ENCODE measurements at regions of chr10 and their contacts with region 1.

Region 1: DNA sequence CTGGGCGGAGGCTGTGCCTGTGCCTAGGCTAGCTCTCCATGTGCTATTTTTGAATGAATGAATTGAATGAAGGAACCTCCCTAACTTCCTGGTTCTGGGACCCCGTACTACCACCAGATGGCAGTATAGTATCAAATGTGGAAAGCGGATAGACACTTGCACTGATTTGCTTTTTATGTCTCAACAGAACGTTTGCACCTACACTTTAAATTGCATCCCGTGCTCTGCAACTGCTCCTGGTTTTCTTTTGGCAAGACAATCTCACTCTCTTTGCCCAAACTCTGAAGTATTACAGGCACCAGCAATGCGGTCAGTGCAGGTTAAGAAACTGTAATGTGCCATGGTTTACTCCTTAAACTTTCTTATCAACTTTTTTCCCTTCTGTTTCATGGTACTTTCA is 6.5 kb downstream of the FZD8 start:
- DNase-seq: peak; percentile 63
- H3K4me3 ChIP-seq: no peak overlapping the region
- H3K27ac ChIP-seq: no peak overlapping the region
- H3K4me1 ChIP-seq: peaks cover 35% of the 10 kb centered on the region
- H3K27me3 ChIP-seq: no peaks in the 10 kb centered on the region
- CTCF ChIP-seq: peak; percentile 92 to 93

Region 2: DNA sequence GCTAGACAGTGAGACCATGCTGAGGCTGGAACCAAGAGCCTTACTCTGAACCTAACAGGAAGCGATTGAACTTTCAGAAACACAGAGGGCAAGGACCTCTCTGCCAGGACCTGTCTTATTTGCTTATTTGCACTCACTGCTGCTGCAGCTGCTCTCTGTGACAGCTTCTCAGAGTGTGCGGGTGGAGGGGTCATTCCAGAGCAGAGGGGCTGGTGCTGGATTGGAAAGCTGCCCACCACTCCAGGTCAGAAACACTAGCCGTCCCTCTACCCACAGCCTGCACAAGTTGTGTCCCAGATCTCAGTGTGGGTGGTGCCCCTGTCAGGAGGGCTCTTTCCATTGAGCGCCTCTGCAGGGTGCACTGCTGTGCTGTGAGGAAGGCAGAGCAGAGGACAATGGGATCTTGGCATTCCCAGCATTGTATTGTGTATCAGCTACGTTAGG is 173.1 kb before region 1 on chr10:
- CTCF ChIA-PET with region 1: no interaction called
- dilution Hi-C with region 1: no loop called
- in situ Hi-C with region 1: no loop called
- intact Hi-C with region 1: no loop called
- DNase-seq: no peak
- H3K4me3 ChIP-seq: no peak overlapping the region
- H3K27ac ChIP-seq: no peak overlapping the region
- H3K4me1 ChIP-seq: peaks cover 16% of the 10 kb centered on the region
- H3K27me3 ChIP-seq: no peaks in the 10 kb centered on the region
- CTCF ChIP-seq: no peak

Region 3: DNA sequence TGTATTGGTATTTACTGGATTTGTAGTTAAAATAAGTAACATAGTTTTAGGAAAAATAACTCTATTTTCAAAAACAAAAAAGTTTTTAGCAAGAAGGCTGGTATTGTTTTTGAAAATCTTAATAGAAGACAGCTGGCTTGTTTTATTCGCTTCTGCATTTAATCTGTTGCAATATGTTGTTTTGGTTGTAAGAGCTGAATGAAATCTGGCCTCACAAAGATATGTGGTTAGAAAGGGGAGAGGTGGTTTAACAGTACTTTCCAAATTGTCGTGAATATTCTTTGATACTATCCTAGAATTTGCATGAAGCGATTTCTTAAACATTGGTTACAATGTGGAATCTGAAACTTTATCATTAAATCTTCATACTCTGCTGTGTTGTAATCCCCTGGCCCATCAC is 362.4 kb after region 1 on chr10:
- CTCF ChIA-PET with region 1: no interaction called
- dilution Hi-C with region 1: no loop called
- in situ Hi-C with region 1: no loop called
- intact Hi-C with region 1: loop called (anchors 2 kb)
- DNase-seq: no peak
- H3K4me3 ChIP-seq: no peak overlapping the region
- H3K27ac ChIP-seq: no peak overlapping the region
- H3K4me1 ChIP-seq: no peaks in the 10 kb centered on the region
- H3K27me3 ChIP-seq: peaks cover 3% of the 10 kb centered on the region
- CTCF ChIP-seq: no peak

Region 4: GRCh38 chr10:36412942-36413341 is 777.4 kb after region 1 on chr10:
- CTCF ChIA-PET with region 1: interaction called, 29 read pairs
- dilution Hi-C with region 1: no loop called
- in situ Hi-C with region 1: no loop called
- intact Hi-C with region 1: no loop called
- DNase-seq: peak; percentile 34
- H3K4me3 ChIP-seq: no peak overlapping the region
- H3K27ac ChIP-seq: no peak overlapping the region
- H3K4me1 ChIP-seq: peaks cover 6% of the 10 kb centered on the region
- H3K27me3 ChIP-seq: no peaks in the 10 kb centered on the region
- CTCF ChIP-seq: no peak

Region 5: DNA sequence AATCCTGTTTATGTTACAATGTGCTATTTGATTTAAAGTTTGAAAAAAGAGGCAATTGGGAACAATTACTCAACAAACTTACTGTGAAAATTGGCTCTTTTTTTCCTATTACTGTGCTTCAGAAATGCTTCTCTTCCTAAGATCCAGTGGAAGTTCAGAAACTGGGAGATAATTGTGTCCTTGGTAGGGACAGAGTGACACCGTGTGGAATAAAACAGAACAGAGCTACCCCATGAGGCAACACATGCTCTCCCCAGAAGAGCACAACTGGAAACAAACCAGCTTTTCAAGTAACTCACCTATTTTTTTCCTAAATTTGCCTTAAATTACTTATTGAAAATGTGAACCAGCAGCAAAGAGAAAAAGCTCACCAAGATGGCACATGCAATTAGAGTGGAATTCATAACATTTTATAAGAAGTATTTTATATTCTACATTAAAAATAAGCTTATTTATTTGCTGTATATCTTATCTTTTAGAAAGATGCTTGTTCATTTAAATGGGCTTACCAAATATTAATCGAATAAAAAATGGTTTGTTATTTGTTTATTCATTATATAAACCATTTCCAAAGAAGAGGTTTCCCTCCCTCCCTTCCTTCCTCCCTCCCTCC is 1143.8 kb after region 1 on chr10:
- CTCF ChIA-PET with region 1: interaction called, 11 read pairs
- dilution Hi-C with region 1: no loop called
- in situ Hi-C with region 1: loop called (anchors 5 kb)
- intact Hi-C with region 1: loop called (anchors 1 kb)
- DNase-seq: peak; percentile 57
- H3K4me3 ChIP-seq: no peak overlapping the region
- H3K27ac ChIP-seq: no peak overlapping the region
- H3K4me1 ChIP-seq: no peaks in the 10 kb centered on the region
- H3K27me3 ChIP-seq: no peaks in the 10 kb centered on the region
- CTCF ChIP-seq: peak; percentile 71 to 76

Region 6: GRCh38 chr10:36888929-36889573 is 1253.5 kb after region 1 on chr10:
- CTCF ChIA-PET with region 1: no interaction called
- dilution Hi-C with region 1: no loop called
- in situ Hi-C with region 1: loop called in 1 of 2 experiments (anchors 10 kb)
- intact Hi-C with region 1: no loop called
- DNase-seq: peak; percentile 31
- H3K4me3 ChIP-seq: no peak overlapping the region
- H3K27ac ChIP-seq: no peak overlapping the region
- H3K4me1 ChIP-seq: no peaks in the 10 kb centered on the region
- H3K27me3 ChIP-seq: no peaks in the 10 kb centered on the region
- CTCF ChIP-seq: peak; percentile 34 to 36